ENCODE measurements at regions of chr1 and their contacts with region 1.

Region 1: DNA sequence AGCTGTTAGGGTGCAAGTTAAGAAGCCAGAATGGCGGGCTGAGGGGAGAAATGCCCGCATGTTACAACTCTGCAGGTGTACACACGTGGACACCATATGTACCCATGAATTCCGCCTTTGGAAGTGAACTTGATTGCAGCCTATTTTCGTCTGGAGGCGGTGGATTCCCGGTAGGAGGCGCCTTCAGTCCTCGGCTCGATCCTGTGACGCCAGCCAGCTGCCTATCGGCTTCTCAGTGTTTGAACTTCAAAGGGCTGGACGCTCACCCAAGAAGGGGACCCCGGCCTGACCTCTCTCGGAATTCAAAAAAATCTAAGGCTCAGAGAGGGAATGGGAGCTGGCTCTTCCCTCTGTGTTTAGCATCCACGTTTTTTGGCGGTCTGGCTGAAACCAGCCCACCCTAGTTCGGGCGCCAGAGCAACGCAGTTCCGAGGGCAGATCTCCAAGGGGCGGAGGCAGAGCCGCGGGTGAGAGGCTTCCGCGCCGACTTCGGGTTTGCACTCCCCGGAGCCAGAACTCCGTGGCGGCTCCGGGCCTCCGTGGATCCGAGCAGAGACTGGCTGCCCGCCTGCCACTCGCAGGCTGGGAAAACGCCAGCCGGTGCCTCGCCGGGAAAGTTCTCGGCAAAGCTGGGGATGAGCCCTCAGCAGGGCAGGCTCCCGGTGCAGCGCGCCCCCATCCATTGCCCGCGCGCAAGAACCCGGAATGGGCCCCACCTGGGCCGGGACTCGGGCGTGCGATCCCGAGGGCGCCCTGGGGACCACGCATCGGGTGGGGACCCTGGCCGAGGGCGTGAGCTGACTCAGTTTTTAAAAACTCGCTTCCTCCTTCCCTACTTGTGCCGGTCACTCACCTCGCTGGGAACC is 996 bp upstream of the TMEM51 start:
- DNase-seq: peak; percentile 74
- H3K4me3 ChIP-seq: peak overlapping the region; percentile 71
- H3K27ac ChIP-seq: peak overlapping the region; percentile 65
- H3K27me3 ChIP-seq: peaks cover 8% of the 10 kb centered on the region
- CTCF ChIP-seq: peak; percentile 82

Region 2: DNA sequence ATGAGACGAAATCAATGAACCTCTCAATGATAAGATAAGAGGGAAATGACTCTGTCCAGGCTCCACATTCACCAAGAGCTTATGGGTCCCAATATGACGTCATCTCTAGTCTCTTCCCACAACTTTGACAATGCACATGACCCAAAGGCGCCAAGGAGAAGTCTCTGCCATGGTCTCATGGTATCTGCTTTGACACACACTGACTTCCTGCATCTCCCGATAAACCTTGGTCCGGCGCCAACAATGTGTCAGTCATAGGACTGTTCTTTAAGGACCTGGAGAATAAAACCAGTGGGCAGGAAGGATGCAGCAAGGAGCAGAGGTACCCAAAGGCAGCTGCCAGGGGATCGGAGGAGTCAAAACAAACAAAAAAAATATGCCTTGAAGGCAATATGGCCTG is 45.9 kb before region 1 on chr1:
- CTCF ChIA-PET with region 1: no interaction called
- POLR2A ChIA-PET with region 1: no interaction called
- DNase-seq: no peak
- H3K4me3 ChIP-seq: no peak overlapping the region
- H3K27ac ChIP-seq: no peak overlapping the region
- H3K27me3 ChIP-seq: peaks cover 10% of the 10 kb centered on the region
- CTCF ChIP-seq: no peak

Region 3: GRCh38 chr1:15128520-15129313 is 23.8 kb before region 1 on chr1:
- CTCF ChIA-PET with region 1: interaction called, 16 read pairs
- POLR2A ChIA-PET with region 1: interaction called, 3 read pairs
- DNase-seq: no peak
- H3K4me3 ChIP-seq: no peak overlapping the region
- H3K27ac ChIP-seq: no peak overlapping the region
- H3K27me3 ChIP-seq: peaks cover 11% of the 10 kb centered on the region
- CTCF ChIP-seq: peak; percentile 92

Region 4: DNA sequence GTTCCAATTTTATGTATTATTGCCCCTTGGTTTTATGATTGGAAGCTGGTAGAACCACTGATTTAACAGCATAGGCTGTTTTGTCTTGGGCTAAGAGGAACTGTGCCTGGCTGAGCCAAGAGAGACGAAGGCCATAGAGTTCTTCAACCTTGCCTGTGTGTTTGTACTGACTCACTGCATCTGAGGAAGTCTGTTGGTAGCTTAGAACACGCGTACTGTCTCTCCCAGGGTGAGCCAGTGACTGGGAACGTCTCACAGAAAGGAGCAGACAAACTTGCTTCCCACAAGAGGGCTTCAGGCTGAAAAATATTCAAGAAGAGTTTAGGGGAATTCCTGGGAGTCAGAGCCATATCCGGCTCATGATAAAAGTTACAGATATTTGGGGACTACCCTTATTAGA is 15.9 kb after region 1 on chr1:
- CTCF ChIA-PET with region 1: interaction called, 8 read pairs
- POLR2A ChIA-PET with region 1: interaction called, 13 read pairs
- DNase-seq: peak; percentile 86
- H3K4me3 ChIP-seq: no peak overlapping the region
- H3K27ac ChIP-seq: peak overlapping the region; percentile 77
- H3K27me3 ChIP-seq: no peaks in the 10 kb centered on the region
- CTCF ChIP-seq: peak; percentile 27; the same call in 1 of the 2 replicates

Region 5: GRCh38 chr1:15272009-15272788 is 119.6 kb after region 1 on chr1:
- CTCF ChIA-PET with region 1: interaction called, 65 read pairs
- POLR2A ChIA-PET with region 1: no interaction called
- DNase-seq: peak; percentile 47
- H3K4me3 ChIP-seq: no peak overlapping the region
- H3K27ac ChIP-seq: no peak overlapping the region
- H3K27me3 ChIP-seq: peaks cover 16% of the 10 kb centered on the region
- CTCF ChIP-seq: peak; percentile 89

Region 6: DNA sequence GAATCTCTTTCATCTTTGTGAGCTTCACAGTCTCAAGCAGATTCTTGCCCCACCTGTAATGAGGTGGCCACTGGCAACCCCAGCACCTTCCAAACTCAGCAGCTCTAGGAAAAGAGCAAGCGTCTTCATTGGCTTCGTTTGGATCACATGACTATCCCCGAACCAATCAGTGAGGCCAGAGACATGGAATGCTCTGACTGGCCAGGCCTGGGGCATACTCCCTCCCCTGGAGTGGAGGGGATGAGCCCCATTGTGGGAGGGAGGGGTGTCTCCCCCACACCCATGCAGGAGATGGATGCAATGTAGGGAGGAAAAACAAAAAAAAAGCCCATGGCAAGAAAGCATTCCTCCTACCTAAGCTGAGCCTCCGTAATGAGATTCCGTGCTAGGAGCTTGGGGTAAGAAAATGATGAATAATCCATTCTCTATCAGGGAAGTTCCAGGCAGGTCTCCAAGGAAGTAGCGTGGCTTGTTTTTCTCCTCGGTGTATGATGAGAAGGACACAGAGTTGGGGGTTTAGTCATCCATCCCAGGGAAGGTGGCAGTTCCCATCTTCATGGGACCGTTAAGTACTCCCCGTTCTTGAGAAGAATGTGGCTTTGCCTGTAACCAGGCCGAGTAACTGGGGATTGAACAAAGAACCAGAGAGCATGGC is 127.2 kb after region 1 on chr1:
- CTCF ChIA-PET with region 1: interaction called, 13 read pairs
- POLR2A ChIA-PET with region 1: no interaction called
- DNase-seq: no peak
- H3K4me3 ChIP-seq: no peak overlapping the region
- H3K27ac ChIP-seq: no peak overlapping the region
- H3K27me3 ChIP-seq: peaks cover 19% of the 10 kb centered on the region
- CTCF ChIP-seq: no peak

Region 7: DNA sequence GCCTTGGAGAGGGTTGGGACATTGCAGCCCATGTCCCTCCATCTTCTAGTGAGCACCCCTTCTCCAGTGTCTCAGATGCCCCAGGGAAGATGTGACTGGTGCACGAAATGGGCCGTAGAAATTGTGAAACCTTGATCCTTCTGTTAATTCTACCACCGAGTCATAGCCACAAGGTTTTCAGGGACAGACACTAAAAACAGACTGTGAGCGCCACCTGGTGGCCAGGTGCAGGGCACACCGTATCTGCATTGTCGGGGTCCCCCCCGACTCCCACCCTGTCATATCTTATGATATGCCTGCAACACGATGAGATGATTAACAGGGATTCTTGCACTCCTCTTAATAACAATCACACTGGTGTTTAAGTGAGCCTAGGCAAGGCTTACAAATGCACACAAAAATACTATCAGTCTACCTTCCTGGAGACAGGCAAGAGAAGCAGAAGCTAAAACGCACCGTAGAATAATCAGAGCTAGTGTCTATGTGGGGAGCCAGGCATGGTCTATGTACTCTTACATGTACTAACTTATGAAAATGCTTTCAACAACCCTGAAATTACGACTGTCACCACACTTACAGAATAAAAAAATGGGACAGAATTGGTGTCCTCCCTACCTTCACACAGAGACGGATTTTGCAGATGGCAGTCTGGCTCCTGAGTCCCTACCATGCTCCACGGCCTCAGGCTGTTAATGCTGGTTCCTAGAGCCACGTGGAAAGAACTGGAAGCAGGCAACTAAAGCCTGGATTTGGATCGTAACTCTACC is 152.3 kb after region 1 on chr1:
- CTCF ChIA-PET with region 1: interaction called, 18 read pairs
- POLR2A ChIA-PET with region 1: no interaction called
- DNase-seq: no peak
- H3K4me3 ChIP-seq: no peak overlapping the region
- H3K27ac ChIP-seq: no peak overlapping the region
- H3K27me3 ChIP-seq: peaks cover 3% of the 10 kb centered on the region
- CTCF ChIP-seq: peak; percentile 74

Measured in AG04450 (cell line).